ENCODE measurements at regions of chr3 and their contacts with region 1.

Region 1: DNA sequence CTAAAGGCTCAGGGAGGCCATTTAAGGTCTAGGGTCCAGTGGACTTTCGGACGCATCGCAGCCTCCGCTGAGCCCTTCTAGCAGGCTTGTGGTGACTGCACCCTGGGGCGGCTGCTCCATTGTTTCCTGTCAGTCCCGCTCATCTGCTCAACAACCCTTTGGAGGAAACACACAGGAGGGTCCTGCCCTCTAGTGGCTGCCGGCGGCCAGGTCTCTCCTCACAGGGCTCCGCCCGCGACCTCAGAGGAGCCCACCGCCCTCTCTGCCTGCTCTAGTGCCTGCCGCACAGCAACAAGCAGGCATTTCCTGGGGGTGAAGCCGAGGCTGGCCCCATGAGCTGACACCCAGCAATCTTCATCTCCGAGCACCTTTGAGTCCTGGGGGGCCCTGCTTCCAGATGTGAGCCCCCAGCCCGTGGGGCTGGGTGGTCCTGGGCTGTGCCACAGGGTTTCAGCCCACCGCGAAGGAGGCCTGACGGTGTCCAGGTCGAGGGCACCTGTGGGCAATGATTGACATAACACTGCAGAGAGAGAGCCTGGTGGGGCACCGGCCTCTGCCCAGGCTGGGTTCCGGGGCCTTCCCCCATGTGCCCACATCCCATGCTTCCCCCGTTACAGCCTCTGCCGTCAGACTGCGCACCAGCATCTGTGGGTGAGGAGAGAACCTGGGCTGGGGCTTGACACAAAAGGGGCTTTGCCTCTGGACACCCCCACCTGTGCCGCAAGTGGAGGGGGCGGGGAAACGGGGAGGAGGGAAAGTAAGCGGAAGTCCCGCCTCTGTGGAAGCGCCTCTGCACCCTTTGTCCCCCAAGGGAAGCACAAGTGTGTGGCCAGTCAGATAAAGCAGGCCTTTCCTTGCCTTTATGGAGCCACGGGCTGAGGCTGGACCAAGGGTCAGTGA is 27.0 kb upstream of the SFMBT1 start:
- DNase-seq: peak; percentile 74 to 91 (median 88)
- ATAC-seq: peak; percentile 97
- H3K4me3 ChIP-seq: peak overlapping the region; percentile 82
- H3K4me3 Mint-ChIP-seq: peak overlapping the region; percentile 90 to 97 (median 92)
- H3K27ac ChIP-seq: peak overlapping the region; percentile 79
- H3K27ac Mint-ChIP-seq: peak overlapping the region; percentile 84 to 97 (median 95)
- H3K4me1 ChIP-seq: peaks cover 9 to 15% of the 10 kb centered on the region in 2 donors
- H3K4me1 Mint-ChIP-seq: peaks cover 12 to 24% (median 20%) of the 10 kb centered on the region in 7 donors
- H3K27me3 ChIP-seq: no peaks in the 10 kb centered on the region
- H3K27me3 Mint-ChIP-seq: peaks cover 0 to 6% (median 0%) of the 10 kb centered on the region in 5 donors

Region 2: GRCh38 chr3:52471371-52472238 is 601.3 kb before region 1 on chr3:
- CTCF ChIA-PET with region 1: no interaction called
- POLR2A ChIA-PET with region 1: no interaction called
- intact Hi-C with region 1: loop called (anchors 5 kb)
- DNase-seq: peak in 4 of 9 donors; percentile 9 to 45 (median 16)
- ATAC-seq: peak; percentile 67
- H3K4me3 ChIP-seq: no peak overlapping the region
- H3K4me3 Mint-ChIP-seq: no peak overlapping the region
- H3K27ac ChIP-seq: no peak overlapping the region
- H3K27ac Mint-ChIP-seq: peak overlapping the region in 1 of 9 donors; percentile 25
- H3K4me1 ChIP-seq: no peaks in the 10 kb centered on the region
- H3K4me1 Mint-ChIP-seq: peaks cover 4 to 8% (median 6%) of the 10 kb centered on the region in 7 donors
- H3K27me3 ChIP-seq: no peaks in the 10 kb centered on the region
- H3K27me3 Mint-ChIP-seq: no peaks in the 10 kb centered on the region

Region 3: DNA sequence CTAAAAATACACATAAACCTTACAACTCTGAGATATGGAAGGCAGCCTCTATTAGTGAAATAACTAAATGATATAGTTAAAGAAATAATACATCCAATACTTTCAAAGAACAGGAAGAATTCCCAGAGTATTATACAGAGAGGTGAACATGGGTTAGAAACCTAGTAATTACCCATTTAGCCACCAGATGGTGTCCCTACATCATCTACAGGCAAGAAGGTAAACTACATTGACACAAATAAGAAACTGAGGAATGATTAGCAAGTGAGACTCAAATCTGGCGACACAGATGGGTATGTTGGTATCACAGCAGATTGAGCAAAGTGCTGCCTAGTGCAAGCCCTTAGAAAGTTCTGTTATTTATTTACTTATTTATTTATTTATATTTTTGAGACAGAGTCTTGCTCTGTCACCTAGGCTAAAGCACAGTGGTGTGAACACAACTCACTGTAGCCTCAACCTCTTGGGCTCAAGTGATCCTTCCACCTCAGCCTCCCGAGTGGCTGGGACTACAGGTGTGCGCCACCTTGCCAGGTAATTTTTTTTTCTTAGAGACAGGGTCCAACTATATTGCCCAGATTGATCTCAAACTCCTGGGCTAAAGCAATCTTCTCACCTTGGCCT is 330.4 kb before region 1 on chr3:
- CTCF ChIA-PET with region 1: interaction called, 7 read pairs
- POLR2A ChIA-PET with region 1: no interaction called
- intact Hi-C with region 1: loop called in 1 of 2 experiments (anchors 1 kb)
- DNase-seq: peak in 5 of 9 donors; percentile 18 to 35 (median 20)
- ATAC-seq: peak; percentile 50
- H3K4me3 ChIP-seq: no peak overlapping the region
- H3K4me3 Mint-ChIP-seq: no peak overlapping the region
- H3K27ac ChIP-seq: no peak overlapping the region
- H3K27ac Mint-ChIP-seq: no peak overlapping the region
- H3K4me1 ChIP-seq: no peaks in the 10 kb centered on the region
- H3K4me1 Mint-ChIP-seq: peaks cover 0 to 2% (median 0%) of the 10 kb centered on the region in 7 donors
- H3K27me3 ChIP-seq: no peaks in the 10 kb centered on the region
- H3K27me3 Mint-ChIP-seq: no peaks in the 10 kb centered on the region

Region 4: GRCh38 chr3:52845691-52846431 is 227.0 kb before region 1 on chr3:
- CTCF ChIA-PET with region 1: no interaction called
- POLR2A ChIA-PET with region 1: no interaction called
- intact Hi-C with region 1: loop called (anchors 1 kb)
- DNase-seq: peak in 3 of 9 donors; percentile 7 to 24 (median 14)
- ATAC-seq: peak; percentile 49
- H3K4me3 ChIP-seq: no peak overlapping the region
- H3K4me3 Mint-ChIP-seq: no peak overlapping the region
- H3K27ac ChIP-seq: no peak overlapping the region
- H3K27ac Mint-ChIP-seq: no peak overlapping the region
- H3K4me1 ChIP-seq: no peaks in the 10 kb centered on the region
- H3K4me1 Mint-ChIP-seq: peaks cover 0 to 10% (median 0%) of the 10 kb centered on the region in 7 donors
- H3K27me3 ChIP-seq: no peaks in the 10 kb centered on the region
- H3K27me3 Mint-ChIP-seq: no peaks in the 10 kb centered on the region

Region 5: DNA sequence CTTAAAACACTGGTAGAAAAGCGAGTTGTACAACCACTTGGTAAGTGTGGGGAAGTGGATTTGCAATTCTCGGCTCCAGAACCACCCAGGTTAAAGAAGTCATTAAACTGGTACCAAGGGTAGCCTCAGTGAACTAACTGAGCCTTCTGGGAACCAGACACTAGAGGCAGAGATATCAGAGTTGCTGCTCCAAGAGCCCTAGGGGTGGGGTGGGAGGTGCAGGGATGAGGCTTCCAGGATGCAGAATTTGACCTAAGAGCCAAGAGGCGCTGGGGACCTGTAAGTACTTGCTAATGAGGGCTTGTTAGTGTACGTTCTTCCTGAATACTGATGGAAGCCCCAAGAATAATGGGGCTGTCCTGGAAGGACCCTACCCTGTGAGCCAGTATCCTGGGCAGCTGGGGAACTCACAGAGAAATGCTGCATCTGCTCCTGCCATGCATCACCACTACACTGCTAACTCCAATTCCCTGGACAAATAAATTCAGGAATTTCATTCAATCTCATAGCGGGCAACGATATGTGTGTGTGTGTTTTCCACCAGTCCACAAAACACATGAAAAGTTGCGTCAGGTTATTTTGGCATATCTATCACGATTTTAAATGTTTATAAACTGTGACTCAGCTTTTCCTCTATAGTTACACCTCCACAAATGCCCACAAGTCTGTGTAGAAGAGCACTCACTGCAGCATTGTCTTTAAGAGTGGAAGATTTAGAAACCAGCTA is 199.3 kb before region 1 on chr3:
- CTCF ChIA-PET with region 1: no interaction called
- POLR2A ChIA-PET with region 1: no interaction called
- intact Hi-C with region 1: no loop called
- DNase-seq: no peak
- ATAC-seq: no peak
- H3K4me3 ChIP-seq: no peak overlapping the region
- H3K4me3 Mint-ChIP-seq: no peak overlapping the region
- H3K27ac ChIP-seq: no peak overlapping the region
- H3K27ac Mint-ChIP-seq: peak overlapping the region in 1 of 9 donors; percentile 33
- H3K4me1 ChIP-seq: peaks cover 0 to 3% of the 10 kb centered on the region in 2 donors
- H3K4me1 Mint-ChIP-seq: peaks cover 23 to 38% (median 35%) of the 10 kb centered on the region in 7 donors
- H3K27me3 ChIP-seq: no peaks in the 10 kb centered on the region
- H3K27me3 Mint-ChIP-seq: no peaks in the 10 kb centered on the region

Region 6: GRCh38 chr3:52907497-52907896 is 165.4 kb before region 1 on chr3:
- CTCF ChIA-PET with region 1: interaction called, 3 read pairs
- POLR2A ChIA-PET with region 1: no interaction called
- intact Hi-C with region 1: loop called in 1 of 2 experiments (anchors 1 kb)
- DNase-seq: peak in 1 of 9 donors; percentile 16
- ATAC-seq: no peak
- H3K4me3 ChIP-seq: no peak overlapping the region
- H3K4me3 Mint-ChIP-seq: no peak overlapping the region
- H3K27ac ChIP-seq: no peak overlapping the region
- H3K27ac Mint-ChIP-seq: peak overlapping the region in 3 of 9 donors; percentile 51 to 56 (median 53)
- H3K4me1 ChIP-seq: no peaks in the 10 kb centered on the region
- H3K4me1 Mint-ChIP-seq: no peaks in the 10 kb centered on the region
- H3K27me3 ChIP-seq: no peaks in the 10 kb centered on the region
- H3K27me3 Mint-ChIP-seq: no peaks in the 10 kb centered on the region

Region 7: GRCh38 chr3:52983336-52983807 is 89.5 kb before region 1 on chr3:
- CTCF ChIA-PET with region 1: no interaction called
- POLR2A ChIA-PET with region 1: interaction called, 5 read pairs
- intact Hi-C with region 1: loop called (anchors 1 kb)
- DNase-seq: peak in 8 of 9 donors; percentile 71 to 94 (median 88)
- ATAC-seq: peak; percentile 96
- H3K4me3 ChIP-seq: no peak overlapping the region
- H3K4me3 Mint-ChIP-seq: peak overlapping the region; percentile 52 to 86 (median 75)
- H3K27ac ChIP-seq: peak overlapping the region; percentile 25
- H3K27ac Mint-ChIP-seq: peak overlapping the region; percentile 76 to 97 (median 88)
- H3K4me1 ChIP-seq: peaks cover 16 to 27% of the 10 kb centered on the region in 2 donors
- H3K4me1 Mint-ChIP-seq: peaks cover 30 to 73% (median 47%) of the 10 kb centered on the region in 7 donors
- H3K27me3 ChIP-seq: no peaks in the 10 kb centered on the region
- H3K27me3 Mint-ChIP-seq: no peaks in the 10 kb centered on the region

Region 8: DNA sequence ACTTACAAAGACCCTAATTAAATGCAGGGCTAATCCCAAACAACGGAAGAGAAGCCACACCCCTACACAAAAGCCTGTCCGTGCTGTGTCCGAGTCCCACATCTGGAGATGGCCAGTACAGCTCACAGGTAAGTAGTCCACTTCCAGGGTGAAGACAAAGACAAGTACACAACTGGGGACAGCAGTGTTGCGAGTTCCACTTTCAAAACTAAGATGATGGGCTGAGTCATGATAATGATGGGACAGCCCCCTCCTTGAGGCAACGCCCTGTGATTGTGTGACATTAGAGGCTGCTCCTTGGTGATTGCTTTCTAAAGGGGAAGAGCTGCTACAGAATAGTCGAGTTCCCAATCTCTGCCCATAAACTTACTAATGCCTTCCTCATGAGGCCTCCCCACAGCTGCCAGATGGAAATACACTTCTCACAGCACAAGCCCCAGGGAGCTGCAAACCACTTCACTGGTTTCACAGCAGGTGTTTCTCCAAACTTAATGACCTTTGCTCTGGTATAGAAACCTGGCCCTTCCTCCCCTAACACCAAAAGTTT is 29.8 kb after region 1 on chr3:
- CTCF ChIA-PET with region 1: no interaction called
- POLR2A ChIA-PET with region 1: no interaction called
- intact Hi-C with region 1: loop called in 1 of 2 experiments (anchors 2 kb)
- DNase-seq: peak in 3 of 9 donors; percentile 13 to 52 (median 20)
- ATAC-seq: peak; percentile 84
- H3K4me3 ChIP-seq: no peak overlapping the region
- H3K4me3 Mint-ChIP-seq: peak overlapping the region in 8 of 10 donors; percentile 10 to 82 (median 68)
- H3K27ac ChIP-seq: no peak overlapping the region
- H3K27ac Mint-ChIP-seq: peak overlapping the region in 8 of 9 donors; percentile 30 to 95 (median 72)
- H3K4me1 ChIP-seq: peaks cover 0 to 23% of the 10 kb centered on the region in 2 donors
- H3K4me1 Mint-ChIP-seq: peaks cover 29 to 81% (median 59%) of the 10 kb centered on the region in 7 donors
- H3K27me3 ChIP-seq: no peaks in the 10 kb centered on the region
- H3K27me3 Mint-ChIP-seq: no peaks in the 10 kb centered on the region

Region 9: GRCh38 chr3:54374214-54374855 is 1301.4 kb after region 1 on chr3:
- CTCF ChIA-PET with region 1: no interaction called
- POLR2A ChIA-PET with region 1: no interaction called
- intact Hi-C with region 1: no loop called
- DNase-seq: no peak
- ATAC-seq: no peak
- H3K4me3 ChIP-seq: no peak overlapping the region
- H3K4me3 Mint-ChIP-seq: no peak overlapping the region
- H3K27ac ChIP-seq: no peak overlapping the region
- H3K27ac Mint-ChIP-seq: no peak overlapping the region
- H3K4me1 ChIP-seq: no peaks in the 10 kb centered on the region
- H3K4me1 Mint-ChIP-seq: peaks cover 0 to 5% (median 0%) of the 10 kb centered on the region in 7 donors
- H3K27me3 ChIP-seq: peaks cover 0 to 3% of the 10 kb centered on the region in 2 donors
- H3K27me3 Mint-ChIP-seq: peaks cover 0 to 7% (median 5%) of the 10 kb centered on the region in 5 donors

Measured in naive thymus-derived CD4-positive, alpha-beta T cell (primary cell).